Ascending aorta (tissue), 2 donors: ENCODE measurements at regions of chr4 and their contacts with region 1.

Region 1: DNA sequence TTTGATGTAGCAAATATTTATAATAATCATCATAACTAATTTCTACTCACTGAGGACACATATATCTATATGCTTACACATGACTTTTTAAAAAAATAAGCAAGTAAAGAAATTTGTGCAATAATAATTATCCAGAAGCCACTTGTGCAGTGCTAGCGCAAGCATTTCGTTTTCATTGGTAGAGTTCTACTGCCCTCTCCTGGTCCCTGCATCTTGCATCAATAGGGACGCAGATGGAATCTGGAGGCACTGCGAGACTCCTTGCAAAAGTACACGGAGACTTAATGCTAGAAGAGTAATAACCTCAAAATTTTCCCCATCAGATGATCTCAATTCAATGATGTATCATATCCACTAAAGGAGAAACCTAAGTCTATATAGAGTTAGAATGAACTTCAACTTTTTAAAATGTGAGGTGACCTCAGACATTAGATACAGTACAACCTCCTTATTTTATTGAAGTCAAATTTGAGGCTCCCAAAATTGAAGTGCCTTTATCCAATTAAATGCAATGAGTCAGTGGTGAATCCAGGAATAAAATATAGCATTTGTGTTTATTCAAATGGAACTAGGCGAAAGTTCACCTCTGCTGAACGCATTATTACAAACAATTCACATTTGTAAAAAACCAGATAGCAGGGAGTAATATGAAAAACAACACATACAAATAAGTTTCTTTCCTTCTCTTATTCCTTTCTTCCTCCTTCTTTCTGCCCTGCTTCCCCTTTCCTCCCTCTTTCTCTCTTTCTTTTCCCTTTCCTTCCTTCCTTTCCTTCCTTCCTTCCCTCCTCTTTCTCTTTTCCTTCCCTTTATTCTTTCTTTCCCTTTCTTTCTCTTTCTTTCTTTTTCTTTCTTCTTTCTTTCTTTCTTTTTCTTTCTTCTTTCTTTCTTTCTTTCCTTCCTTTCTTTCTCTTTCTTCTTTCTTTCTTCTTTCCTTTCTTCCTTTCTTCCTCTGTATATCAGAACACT is 450.0 kb downstream of the ANKRD50 start:
- DNase-seq: peak in 1 of 2 donors; percentile 82
- H3K4me3 ChIP-seq: no peak overlapping the region
- H3K27ac ChIP-seq: no peak overlapping the region
- H3K4me1 ChIP-seq: no peaks in the 10 kb centered on the region
- H3K27me3 ChIP-seq: no peaks in the 10 kb centered on the region
- CTCF ChIP-seq: peak; percentile 61 to 86 (median 79)

Region 2: DNA sequence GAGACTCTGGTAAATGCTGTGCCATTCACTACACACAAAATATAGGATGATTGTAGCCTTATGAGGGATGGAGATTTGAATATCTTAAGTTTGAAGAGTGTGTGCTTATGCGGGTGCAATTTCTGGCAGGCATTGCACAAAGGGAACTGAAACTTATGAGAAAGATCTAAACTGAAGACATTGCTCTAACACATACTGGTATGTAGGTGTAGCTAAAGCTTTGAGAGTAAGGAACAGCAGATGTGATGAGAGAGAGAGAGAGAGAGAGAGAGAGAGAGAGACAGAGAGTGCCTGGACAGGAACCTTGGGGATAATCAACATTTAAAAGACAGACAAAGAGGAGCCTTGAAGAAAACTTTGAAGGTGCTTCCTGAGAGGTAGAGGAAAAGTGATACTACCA is 486.2 kb before region 1 on chr4:
- intact Hi-C with region 1: loop called (anchors 1 kb)
- DNase-seq: no peak
- H3K4me3 ChIP-seq: no peak overlapping the region
- H3K27ac ChIP-seq: no peak overlapping the region
- H3K4me1 ChIP-seq: no peaks in the 10 kb centered on the region
- H3K27me3 ChIP-seq: no peaks in the 10 kb centered on the region
- CTCF ChIP-seq: no peak

Region 3: GRCh38 chr4:124028182-124028581 is 234.3 kb before region 1 on chr4:
- intact Hi-C with region 1: no loop called
- DNase-seq: no peak
- H3K4me3 ChIP-seq: no peak overlapping the region
- H3K27ac ChIP-seq: peak overlapping the region in 1 of 2 donors; percentile 40
- H3K4me1 ChIP-seq: peaks cover 0 to 10% of the 10 kb centered on the region in 2 donors
- H3K27me3 ChIP-seq: no peaks in the 10 kb centered on the region
- CTCF ChIP-seq: no peak

Region 4: DNA sequence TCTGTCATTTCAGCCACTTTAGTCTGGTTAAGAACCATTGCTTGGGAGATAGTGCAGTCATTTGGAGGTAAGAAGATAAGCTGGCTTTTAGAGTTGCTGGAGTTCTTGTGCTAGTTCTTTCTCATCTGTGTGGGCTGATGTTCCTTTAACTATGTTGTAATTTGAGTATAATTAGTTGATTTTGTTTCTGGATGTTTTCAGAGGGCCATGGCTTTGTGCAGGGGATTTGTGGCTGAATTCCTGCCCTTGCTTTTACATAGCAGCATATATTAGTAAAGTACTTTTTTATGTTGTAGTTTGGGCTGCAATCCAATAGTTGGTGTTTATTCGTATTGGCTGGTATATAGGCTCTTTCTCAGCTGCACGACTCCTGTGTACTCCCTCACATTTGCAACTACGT is 110.4 kb after region 1 on chr4:
- intact Hi-C with region 1: no loop called
- DNase-seq: no peak
- H3K4me3 ChIP-seq: no peak overlapping the region
- H3K27ac ChIP-seq: no peak overlapping the region
- H3K4me1 ChIP-seq: no peaks in the 10 kb centered on the region
- H3K27me3 ChIP-seq: no peaks in the 10 kb centered on the region
- CTCF ChIP-seq: no peak